ENCODE measurements at regions of chr11 and their contacts with region 1.

Region 1: DNA sequence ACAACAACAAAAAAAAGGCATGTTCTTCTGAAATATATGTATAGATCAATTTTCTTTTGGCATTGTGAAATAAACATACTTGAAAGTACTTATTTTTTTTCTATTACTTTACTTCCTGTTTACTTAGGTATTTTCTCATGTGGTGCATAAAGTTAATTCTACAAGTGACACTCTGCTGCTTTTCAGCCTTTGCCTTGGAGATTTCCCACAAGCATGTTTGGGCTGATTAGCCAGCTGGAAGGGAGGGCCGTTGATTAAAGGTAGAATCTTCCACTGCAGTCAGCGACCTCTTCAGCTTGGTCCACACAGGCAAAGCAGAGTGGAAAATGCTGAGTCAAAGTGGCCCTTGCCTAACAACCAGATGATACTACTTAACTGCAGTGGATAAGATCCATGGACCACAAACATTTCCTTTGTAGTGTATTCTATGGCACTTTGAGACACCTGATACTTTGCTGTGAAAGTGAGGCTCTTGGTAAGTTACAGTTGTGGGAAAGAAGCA is 176.0 kb downstream of the ARHGAP42 start:
- DNase-seq: no peak
- H3K4me3 ChIP-seq: no peak overlapping the region
- H3K27ac ChIP-seq: no peak overlapping the region
- H3K4me1 ChIP-seq: no peaks in the 10 kb centered on the region
- H3K27me3 ChIP-seq: no peaks in the 10 kb centered on the region
- CTCF ChIP-seq: no peak
- EP300 ChIP-seq: no peak
- POLR2A ChIP-seq: no peak

Region 2: DNA sequence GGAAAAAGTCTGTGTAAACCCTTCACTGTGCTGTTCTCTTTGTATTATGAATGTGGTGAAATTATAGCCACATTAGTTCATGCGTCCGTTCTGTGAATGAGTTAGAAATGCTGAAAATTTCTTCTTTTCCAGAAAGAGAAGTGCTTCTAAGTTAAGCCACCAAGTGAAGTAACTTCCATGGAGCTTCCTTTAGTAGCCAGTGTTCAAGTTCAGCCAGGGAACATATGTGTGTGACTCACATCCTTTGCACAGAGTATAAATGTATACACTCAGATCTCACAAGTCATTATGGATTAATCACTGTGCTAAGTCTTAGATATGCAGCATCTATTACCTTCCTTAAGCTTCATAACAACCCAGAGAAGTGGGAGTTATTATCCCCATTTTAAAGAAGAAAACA is 1864.8 kb after region 1 on chr11:
- in situ Hi-C with region 1: no loop called
- intact Hi-C with region 1: loop called (anchors 5 kb)
- DNase-seq: no peak
- H3K4me3 ChIP-seq: no peak overlapping the region
- H3K27ac ChIP-seq: no peak overlapping the region
- H3K4me1 ChIP-seq: no peaks in the 10 kb centered on the region
- H3K27me3 ChIP-seq: no peaks in the 10 kb centered on the region
- CTCF ChIP-seq: no peak
- EP300 ChIP-seq: no peak
- POLR2A ChIP-seq: no peak

Measured in transverse colon (tissue), 4 donors.